Activated CD4-positive, alpha-beta memory T cell treated with anti-CD3 and anti-CD28 coated beads for 36 hours (primary cell): ENCODE measurements at regions of chr13 and their contacts with region 1.

Region 1: GRCh38 chr13:94660695-94661326 is 51.5 kb downstream of the SOX21 start:
- DNase-seq: no peak
- H3K4me3 Mint-ChIP-seq: no peak overlapping the region
- H3K27ac Mint-ChIP-seq: no peak overlapping the region
- H3K4me1 Mint-ChIP-seq: peaks cover 23% of the 10 kb centered on the region
- H3K27me3 Mint-ChIP-seq: peaks cover 23% of the 10 kb centered on the region

Region 2: DNA sequence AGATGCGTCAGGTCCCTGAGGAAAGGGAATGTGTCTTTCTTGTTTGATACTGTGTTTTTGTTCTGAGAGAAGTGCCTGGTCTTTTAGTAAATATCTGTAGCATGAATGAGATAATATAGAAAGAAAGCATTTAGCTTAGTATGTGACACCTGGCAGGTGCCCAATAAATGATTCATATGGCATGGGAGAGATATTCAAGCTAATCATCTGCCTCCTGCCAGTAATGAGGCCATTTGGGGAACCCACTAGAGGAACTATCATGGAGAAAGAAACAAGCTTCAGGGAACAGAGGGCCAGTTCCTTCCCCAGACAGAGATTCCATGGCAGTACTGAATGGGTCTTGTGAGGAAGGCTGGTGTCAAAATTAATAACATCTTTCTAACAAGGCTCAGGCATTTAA is 785.3 kb before region 1 on chr13:
- CTCF ChIA-PET with region 1: no interaction called
- POLR2A ChIA-PET with region 1: no interaction called
- intact Hi-C with region 1: no loop called
- DNase-seq: no peak
- H3K4me3 Mint-ChIP-seq: no peak overlapping the region
- H3K27ac Mint-ChIP-seq: no peak overlapping the region
- H3K4me1 Mint-ChIP-seq: no peaks in the 10 kb centered on the region
- H3K27me3 Mint-ChIP-seq: peaks cover 1% of the 10 kb centered on the region

Region 3: DNA sequence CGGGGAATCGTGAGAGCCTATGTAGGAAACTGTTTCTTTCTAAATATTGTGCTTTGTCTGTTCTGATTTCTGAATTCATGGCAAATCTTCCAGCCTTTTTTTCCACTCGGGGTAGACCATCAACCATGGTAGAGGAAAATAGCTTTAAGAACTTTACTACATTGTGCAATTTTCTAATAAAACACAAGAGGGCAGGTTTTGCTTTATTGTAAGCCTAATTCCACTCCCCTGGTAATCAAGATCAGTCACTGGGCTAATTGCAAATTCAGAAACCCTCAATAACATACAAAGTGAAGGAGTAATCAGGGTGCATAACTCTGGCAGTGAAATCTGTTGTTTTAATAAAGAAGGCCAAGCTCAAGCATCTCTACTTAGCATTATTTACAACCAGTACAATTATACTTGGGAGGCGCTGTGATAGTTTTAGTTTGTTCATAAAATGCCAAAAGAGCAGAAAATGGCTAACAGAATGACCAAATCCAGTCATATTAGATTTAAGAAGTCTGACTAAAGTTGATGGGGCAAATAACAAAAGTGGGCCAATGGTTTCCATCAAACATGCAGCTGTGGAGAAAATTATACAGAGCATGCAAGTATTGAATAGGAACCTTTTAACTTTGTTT is 225.1 kb before region 1 on chr13:
- CTCF ChIA-PET with region 1: no interaction called
- POLR2A ChIA-PET with region 1: no interaction called
- intact Hi-C with region 1: loop called (anchors 5 kb)
- DNase-seq: no peak
- H3K4me3 Mint-ChIP-seq: no peak overlapping the region
- H3K27ac Mint-ChIP-seq: no peak overlapping the region
- H3K4me1 Mint-ChIP-seq: peaks cover 17% of the 10 kb centered on the region
- H3K27me3 Mint-ChIP-seq: peaks cover 3% of the 10 kb centered on the region

Region 4: DNA sequence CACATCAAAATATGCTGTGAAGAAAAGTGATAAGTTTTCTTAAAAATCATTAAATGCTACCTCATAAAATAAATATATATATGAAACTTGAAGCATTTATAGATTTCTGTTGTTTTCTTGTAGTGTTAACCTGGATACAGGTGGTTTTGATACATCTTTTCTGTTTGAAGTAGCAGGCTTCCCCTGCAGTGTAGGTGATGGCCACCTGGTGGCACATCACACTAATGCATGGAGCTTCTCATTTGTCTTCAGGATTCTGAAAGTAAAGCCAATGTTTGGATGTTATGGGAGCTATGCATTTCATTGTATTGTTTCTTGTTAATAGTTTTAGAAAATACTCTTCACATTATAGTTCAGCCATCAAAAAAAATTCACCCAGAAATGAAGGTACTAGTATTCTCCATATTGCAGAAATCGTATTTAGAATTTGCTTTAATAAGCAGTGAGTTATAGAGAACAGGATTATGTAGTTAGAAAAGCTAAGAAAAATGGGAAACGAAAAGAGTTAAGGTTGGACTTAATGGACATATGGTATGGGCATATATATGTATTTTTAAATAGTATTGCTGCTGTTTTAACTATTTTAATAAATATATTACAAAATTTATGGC is 40.4 kb before region 1 on chr13:
- CTCF ChIA-PET with region 1: interaction called, 5 read pairs
- POLR2A ChIA-PET with region 1: no interaction called
- intact Hi-C with region 1: loop called (anchors 5 kb)
- DNase-seq: peak; percentile 40
- H3K4me3 Mint-ChIP-seq: no peak overlapping the region
- H3K27ac Mint-ChIP-seq: no peak overlapping the region
- H3K4me1 Mint-ChIP-seq: peaks cover 9% of the 10 kb centered on the region
- H3K27me3 Mint-ChIP-seq: no peaks in the 10 kb centered on the region

Region 5: DNA sequence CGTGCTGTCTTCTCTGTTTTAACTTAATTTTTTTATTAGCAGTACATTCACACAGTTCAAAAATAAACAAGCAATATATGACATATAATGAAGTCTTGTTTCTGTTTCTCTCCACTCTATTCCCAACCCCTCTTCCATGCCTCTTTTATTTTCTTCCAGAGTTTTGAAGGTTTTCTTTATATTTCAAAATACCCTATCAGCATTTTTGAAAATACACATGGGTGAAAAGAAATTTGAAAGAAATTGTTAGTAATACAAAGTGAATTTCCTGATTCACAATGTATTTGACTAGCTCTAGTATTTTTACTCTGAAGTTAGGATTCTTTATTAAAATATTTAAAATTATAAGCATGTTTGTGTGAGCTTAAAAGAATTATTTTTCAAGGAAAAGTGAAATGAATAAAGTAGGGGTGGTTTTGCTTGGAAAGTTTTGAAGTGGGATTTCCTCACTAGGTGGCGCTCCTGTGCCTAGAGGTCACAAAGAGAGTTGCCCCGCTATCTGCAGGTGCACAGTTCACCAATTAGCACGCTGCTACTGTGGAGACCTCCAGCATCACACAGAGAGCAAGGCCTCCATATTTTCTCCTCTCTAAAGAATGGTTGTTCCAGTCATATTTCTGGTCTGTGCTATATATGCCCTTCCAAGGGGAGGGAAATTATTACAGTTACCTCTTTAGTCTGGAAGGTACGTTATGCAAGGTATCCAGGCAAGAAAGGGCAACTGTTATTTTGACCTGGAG is 14.0 kb after region 1 on chr13:
- CTCF ChIA-PET with region 1: interaction called, 15 read pairs
- POLR2A ChIA-PET with region 1: no interaction called
- intact Hi-C with region 1: no loop called
- DNase-seq: peak; percentile 60
- H3K4me3 Mint-ChIP-seq: no peak overlapping the region
- H3K27ac Mint-ChIP-seq: no peak overlapping the region
- H3K4me1 Mint-ChIP-seq: no peaks in the 10 kb centered on the region
- H3K27me3 Mint-ChIP-seq: peaks cover 29% of the 10 kb centered on the region

Region 6: GRCh38 chr13:95156208-95156607 is 495.4 kb after region 1 on chr13:
- CTCF ChIA-PET with region 1: no interaction called
- POLR2A ChIA-PET with region 1: no interaction called
- intact Hi-C with region 1: loop called (anchors 10 kb)
- DNase-seq: no peak
- H3K4me3 Mint-ChIP-seq: no peak overlapping the region
- H3K27ac Mint-ChIP-seq: no peak overlapping the region
- H3K4me1 Mint-ChIP-seq: peaks cover 4% of the 10 kb centered on the region
- H3K27me3 Mint-ChIP-seq: no peaks in the 10 kb centered on the region